OCI-LY7 (cell line): ENCODE measurements at regions of chr2 and their contacts with region 1.

Region 1: DNA sequence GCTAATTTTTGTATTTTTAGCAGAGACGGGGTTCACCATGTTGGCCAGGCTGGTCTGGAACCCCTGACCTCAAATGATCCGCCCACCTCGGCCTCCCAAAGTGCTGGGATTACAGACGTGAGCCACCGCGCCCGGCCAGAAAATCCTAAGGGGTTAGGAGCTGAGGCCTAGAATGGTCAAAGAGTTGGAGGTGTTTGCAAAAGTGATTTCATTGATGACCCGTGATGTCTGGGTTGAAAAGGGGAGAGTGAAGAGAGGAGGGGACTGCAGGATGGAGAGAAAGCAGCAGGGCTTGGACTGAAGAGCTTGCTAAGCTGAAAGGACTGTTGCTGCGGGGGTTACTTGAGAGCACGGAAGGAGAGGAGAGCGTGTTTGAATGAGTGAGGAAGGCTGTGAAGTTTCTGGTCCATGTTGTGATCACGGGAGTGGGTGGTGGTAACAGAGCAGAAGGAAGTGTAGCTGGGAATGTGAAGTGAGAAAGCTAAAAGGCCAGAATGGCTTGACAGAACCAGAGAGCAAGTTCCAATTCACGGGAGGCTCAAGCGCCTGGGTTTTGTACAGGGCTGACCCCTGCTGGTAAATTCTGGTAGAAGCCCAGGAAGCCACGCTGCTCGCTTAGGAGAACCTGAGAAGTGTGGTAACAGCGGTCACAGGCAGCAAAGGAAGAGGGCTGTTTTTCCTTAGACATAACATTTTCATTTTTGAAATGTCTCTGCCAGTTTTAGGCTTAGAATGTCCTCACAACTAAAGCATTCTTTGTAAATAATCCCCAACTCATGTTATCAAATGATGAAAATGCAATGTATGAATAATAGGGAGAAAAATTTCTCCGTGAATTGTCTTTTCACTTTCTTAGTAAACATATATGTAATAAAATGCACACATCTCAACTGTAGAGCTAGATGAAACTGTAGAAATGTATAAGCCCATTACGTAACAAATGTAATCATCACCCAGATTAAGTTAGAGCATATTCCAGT is 40.5 kb upstream of the ACTR2 start:
- DNase-seq: peak; percentile 82
- H3K4me3 ChIP-seq: no peak overlapping the region
- H3K27ac ChIP-seq: no peak overlapping the region
- H3K4me1 ChIP-seq: peaks cover 9% of the 10 kb centered on the region
- CTCF ChIP-seq: peak; percentile 94

Region 2: DNA sequence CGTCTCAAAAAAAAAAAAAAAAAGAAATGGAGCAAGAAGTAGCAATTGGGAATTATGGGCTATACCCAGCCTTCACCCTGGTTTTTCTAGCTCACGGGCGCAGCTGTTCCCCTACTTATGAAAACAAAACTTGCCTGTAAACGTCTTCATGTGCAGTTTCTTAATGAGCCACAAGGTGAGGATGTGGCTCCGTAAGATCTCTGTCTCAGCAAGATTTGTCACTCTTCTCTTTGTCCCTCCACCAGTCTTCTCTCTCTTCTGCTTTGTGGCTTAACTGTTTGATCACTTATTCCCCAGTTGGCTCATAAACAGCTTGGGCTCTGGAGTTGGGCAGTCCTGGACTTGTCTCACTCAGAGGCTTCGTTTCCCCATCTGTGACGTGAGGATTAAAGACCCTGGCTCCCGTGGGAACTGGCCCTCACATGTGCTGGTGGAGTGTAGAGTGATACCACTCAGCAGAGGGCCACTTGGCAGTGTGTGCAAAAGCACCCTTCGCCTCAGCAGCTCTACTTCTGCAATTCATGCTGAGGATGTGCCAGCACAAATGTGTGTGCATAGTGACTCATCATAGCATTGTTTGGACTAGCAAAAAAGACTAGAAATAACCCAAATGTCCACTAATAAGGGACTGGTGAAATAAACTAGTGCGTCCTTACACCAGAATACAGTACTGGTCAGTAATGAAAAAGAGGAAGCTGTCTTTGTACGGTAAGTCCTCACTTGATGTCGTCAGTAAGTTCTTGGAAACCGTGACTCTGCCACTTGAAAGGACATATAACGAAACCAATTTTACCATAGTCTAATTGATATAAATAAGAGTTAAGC is 122.2 kb before region 1 on chr2:
- CTCF ChIA-PET with region 1: no interaction called
- POLR2A ChIA-PET with region 1: interaction called, 4 read pairs
- intact Hi-C with region 1: loop called (anchors 1 kb)
- DNase-seq: peak; percentile 88
- H3K4me3 ChIP-seq: peak overlapping the region; percentile 43
- H3K27ac ChIP-seq: peak overlapping the region; percentile 67
- H3K4me1 ChIP-seq: peaks cover 46% of the 10 kb centered on the region
- CTCF ChIP-seq: peak; percentile 89

Region 3: DNA sequence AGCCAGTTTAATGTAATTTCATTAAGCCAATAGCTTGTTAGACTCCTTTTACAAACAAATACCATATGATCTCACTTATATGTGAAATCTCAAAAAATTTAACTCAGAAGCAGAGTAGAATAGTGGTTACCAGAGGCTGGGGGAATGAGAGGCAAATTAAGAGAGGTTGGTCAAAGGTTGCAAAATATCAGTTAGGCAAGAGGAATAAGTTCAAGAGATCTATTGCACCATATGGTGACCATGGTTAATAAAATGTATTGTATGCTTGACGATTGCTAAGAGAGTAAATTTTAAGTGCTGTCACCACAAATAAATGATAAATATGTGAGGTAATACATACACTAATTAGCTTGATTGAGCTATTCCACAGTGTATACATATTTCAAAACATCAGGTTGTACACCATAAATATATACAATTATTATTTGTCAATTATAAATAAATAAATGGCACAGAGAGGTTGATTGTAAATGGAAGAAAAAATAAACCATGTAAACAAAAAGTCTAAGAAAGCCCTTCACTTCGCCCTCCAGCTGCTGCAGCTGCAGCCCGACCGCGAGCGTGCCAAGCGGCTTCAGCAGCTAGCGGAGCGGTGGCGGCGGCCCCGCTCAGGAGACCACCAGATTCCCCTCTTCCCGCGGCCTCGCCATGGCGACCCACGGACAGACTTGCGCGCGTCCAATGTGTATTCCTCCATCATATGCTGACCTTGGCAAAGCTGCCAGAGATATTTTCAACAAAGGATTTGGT is 17.5 kb after region 1 on chr2:
- CTCF ChIA-PET with region 1: no interaction called
- POLR2A ChIA-PET with region 1: interaction called, 8 read pairs
- intact Hi-C with region 1: loop called (anchors 2 kb)
- DNase-seq: peak; percentile 50
- H3K4me3 ChIP-seq: no peak overlapping the region
- H3K27ac ChIP-seq: no peak overlapping the region
- H3K4me1 ChIP-seq: peaks cover 23% of the 10 kb centered on the region
- CTCF ChIP-seq: no peak